ENCODE measurements at regions of chr12 and their contacts with region 1.

Region 1: GRCh38 chr12:9027161-9028059 is 38.1 kb downstream of the KLRG1 start:
- DNase-seq: peak; percentile 55
- H3K4me3 Mint-ChIP-seq: peak overlapping the region; percentile 57
- H3K27ac Mint-ChIP-seq: peak overlapping the region; percentile 77
- H3K4me1 Mint-ChIP-seq: peaks cover 24% of the 10 kb centered on the region
- H3K27me3 Mint-ChIP-seq: peaks cover 3% of the 10 kb centered on the region

Region 2: DNA sequence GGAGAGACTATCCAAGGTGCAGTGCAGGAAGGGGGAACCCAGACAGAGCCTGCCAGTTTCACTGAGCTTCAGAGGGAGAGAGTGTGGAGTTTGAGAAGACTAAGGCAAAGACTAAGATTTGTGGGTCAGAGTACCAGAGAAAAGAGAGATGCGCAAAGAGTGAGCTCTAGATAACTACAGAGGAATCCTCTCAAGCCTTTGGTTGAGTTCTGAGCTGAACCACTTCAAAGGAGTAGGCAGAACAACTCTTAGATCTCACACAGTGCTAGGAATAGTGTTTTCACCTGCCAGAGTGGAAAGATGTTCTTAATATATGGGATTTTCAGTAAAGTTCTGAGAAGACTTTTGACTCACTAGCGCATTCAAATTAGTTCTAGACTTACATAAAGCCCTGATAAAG is 67.2 kb before region 1 on chr12:
- CTCF ChIA-PET with region 1: no interaction called
- POLR2A ChIA-PET with region 1: no interaction called
- DNase-seq: no peak
- H3K4me3 Mint-ChIP-seq: no peak overlapping the region
- H3K27ac Mint-ChIP-seq: no peak overlapping the region
- H3K4me1 Mint-ChIP-seq: peaks cover 8% of the 10 kb centered on the region
- H3K27me3 Mint-ChIP-seq: no peaks in the 10 kb centered on the region

Region 3: GRCh38 chr12:8991371-8992345 is 35.8 kb before region 1 on chr12:
- CTCF ChIA-PET with region 1: interaction called, 4 read pairs
- POLR2A ChIA-PET with region 1: interaction called, 10 read pairs
- DNase-seq: no peak
- H3K4me3 Mint-ChIP-seq: peak overlapping the region; percentile 54
- H3K27ac Mint-ChIP-seq: peak overlapping the region; percentile 61
- H3K4me1 Mint-ChIP-seq: peaks cover 65% of the 10 kb centered on the region
- H3K27me3 Mint-ChIP-seq: peaks cover 2% of the 10 kb centered on the region

Region 4: DNA sequence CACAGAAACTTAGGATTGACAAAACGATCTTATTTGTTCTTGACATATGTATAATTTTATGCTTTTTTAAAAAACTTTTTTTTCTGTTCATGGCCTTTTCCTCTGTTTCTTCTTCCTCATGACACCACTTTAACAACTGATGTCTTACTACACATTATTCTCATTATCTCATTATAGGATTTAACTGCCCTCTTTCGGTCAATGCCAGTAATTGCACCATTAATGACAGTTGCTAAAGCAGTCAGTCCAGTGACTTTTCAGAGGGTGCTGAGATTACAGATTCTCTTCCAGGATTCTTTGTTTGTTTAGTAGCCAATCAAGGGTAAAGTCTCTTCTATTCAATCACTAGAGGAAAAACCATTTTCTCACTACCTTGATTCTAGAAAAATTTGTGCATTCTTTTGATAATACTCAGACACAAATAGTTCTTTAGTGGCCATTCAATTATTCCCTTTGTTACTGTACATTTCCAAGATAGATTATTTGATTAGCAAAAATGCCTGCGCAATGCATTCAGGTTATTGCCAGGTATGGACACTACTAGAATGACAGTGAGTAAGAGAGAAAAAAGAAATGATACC is 12.1 kb after region 1 on chr12:
- CTCF ChIA-PET with region 1: interaction called, 12 read pairs
- POLR2A ChIA-PET with region 1: interaction called, 12 read pairs
- DNase-seq: no peak
- H3K4me3 Mint-ChIP-seq: no peak overlapping the region
- H3K27ac Mint-ChIP-seq: no peak overlapping the region
- H3K4me1 Mint-ChIP-seq: peaks cover 26% of the 10 kb centered on the region
- H3K27me3 Mint-ChIP-seq: no peaks in the 10 kb centered on the region

Region 5: GRCh38 chr12:9079883-9080675 is 52.7 kb after region 1 on chr12:
- CTCF ChIA-PET with region 1: no interaction called
- POLR2A ChIA-PET with region 1: no interaction called
- DNase-seq: no peak
- H3K4me3 Mint-ChIP-seq: no peak overlapping the region
- H3K27ac Mint-ChIP-seq: no peak overlapping the region
- H3K4me1 Mint-ChIP-seq: no peaks in the 10 kb centered on the region
- H3K27me3 Mint-ChIP-seq: no peaks in the 10 kb centered on the region

Region 6: GRCh38 chr12:9103050-9103849 is 75.8 kb after region 1 on chr12:
- CTCF ChIA-PET with region 1: no interaction called
- POLR2A ChIA-PET with region 1: no interaction called
- DNase-seq: no peak
- H3K4me3 Mint-ChIP-seq: no peak overlapping the region
- H3K27ac Mint-ChIP-seq: no peak overlapping the region
- H3K4me1 Mint-ChIP-seq: no peaks in the 10 kb centered on the region
- H3K27me3 Mint-ChIP-seq: no peaks in the 10 kb centered on the region